H1 (cell line): ENCODE measurements at regions of chr1 and their contacts with region 1.

Region 1: DNA sequence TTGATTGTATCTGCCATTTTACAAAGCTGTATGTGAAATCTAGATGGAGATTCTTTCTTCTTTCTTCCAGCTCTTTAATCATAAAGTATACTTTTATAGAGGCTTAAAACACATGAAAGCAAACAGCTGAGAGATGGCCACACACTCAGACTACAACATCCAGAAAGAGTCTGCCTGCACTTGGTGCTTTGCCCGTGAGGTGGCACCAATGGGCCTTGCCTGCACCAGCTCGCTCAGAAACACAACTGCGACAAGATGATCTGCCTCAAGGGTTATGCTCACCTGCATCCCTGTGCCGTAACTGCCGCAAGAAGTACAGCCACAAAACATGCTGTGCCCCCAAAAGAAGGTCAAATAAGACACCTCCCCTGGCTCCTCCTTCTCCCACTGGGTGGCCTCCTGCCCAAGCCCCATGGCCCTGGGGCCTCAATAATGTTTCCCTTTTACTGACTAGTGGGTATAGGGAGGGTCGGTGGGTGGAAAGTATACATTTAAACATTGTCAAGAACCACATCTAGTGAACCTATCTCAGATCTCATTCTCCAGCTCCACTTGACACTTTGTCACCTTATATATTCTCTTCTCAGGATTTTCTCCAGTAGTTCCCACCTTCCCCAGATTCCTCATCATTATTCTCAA is 66.7 kb upstream of the ANGPTL3 start:
- DNase-seq: peak; percentile 60 to 75
- H3K4me3 ChIP-seq: no peak overlapping the region
- H3K27ac ChIP-seq: no peak overlapping the region
- H3K4me1 ChIP-seq: no peaks in the 10 kb centered on the region
- H3K27me3 ChIP-seq: peaks cover 0 to 1% (median 0%) of the 10 kb centered on the region in 4 experiments; a peak in 1 of 7 replicates
- CTCF ChIP-seq: peak; percentile 85 to 97 (median 96)
- EP300 ChIP-seq: no peak
- POLR2A ChIP-seq: no peak
- RAD21 ChIP-seq: peak; percentile 97 to 98

Region 2: DNA sequence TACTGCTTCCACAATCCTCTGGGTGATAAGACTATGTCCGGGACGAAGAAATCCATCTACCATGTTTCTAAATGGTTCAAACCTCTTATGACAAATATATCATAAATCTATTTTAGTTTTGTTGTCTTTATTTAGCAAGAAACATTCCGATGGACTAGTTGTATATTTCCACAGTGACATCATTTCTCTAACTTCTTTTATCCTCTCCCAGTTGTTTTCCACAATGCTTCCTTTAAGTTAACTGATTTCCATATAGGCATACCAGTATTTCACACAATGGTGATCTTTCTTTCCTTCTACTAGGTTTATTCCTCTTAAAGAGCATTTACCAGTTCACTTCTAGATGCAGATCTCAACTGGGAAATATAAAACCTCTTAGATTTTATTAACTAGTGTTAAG is 49.0 kb before region 1 on chr1:
- CTCF ChIA-PET with region 1: no interaction called
- POLR2A ChIA-PET with region 1: no interaction called
- DNase-seq: no peak
- H3K4me3 ChIP-seq: no peak overlapping the region
- H3K27ac ChIP-seq: no peak overlapping the region
- H3K4me1 ChIP-seq: peaks cover 0 to 3% (median 0%) of the 10 kb centered on the region in 4 experiments; a peak in 2 of 7 replicates
- H3K27me3 ChIP-seq: no peaks in the 10 kb centered on the region
- CTCF ChIP-seq: no peak
- EP300 ChIP-seq: no peak
- POLR2A ChIP-seq: no peak
- RAD21 ChIP-seq: no peak

Region 3: DNA sequence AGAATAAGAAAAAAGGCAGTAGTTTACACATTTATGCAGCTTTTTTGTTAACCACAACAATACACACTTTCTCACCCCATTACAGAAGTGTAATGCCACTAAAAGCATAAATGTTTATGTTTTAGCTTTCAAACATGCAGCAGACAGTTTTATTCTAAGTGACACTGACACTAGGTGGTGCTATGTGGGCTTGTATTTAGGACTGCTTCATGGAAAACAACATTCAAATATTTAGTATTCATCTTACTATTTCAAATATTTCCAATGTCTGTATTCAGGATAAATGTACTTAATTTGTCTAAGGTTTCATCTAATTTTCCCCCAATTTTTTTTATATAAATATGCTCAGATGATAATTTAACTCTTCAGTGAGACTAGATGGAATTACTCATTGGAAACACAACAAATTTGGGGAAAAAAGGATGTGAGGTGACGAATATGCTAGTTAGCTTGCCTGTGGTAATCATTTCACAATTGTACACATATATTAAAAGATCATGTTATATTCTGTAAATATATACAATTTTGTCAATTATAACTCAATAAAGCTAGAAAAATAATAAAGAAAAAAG is 22.4 kb before region 1 on chr1:
- CTCF ChIA-PET with region 1: interaction called, 10 read pairs
- POLR2A ChIA-PET with region 1: no interaction called
- DNase-seq: no peak
- H3K4me3 ChIP-seq: no peak overlapping the region
- H3K27ac ChIP-seq: no peak overlapping the region
- H3K4me1 ChIP-seq: no peaks in the 10 kb centered on the region
- H3K27me3 ChIP-seq: no peaks in the 10 kb centered on the region
- CTCF ChIP-seq: peak in 1 of 3 experiments; percentile 60; a peak in 2 of 4 replicates
- EP300 ChIP-seq: no peak
- POLR2A ChIP-seq: no peak
- RAD21 ChIP-seq: peak; percentile 54 to 56

Region 4: GRCh38 chr1:62841587-62842169 is 311.0 kb after region 1 on chr1:
- CTCF ChIA-PET with region 1: interaction called, 10 read pairs
- POLR2A ChIA-PET with region 1: no interaction called
- DNase-seq: no peak
- H3K4me3 ChIP-seq: no peak overlapping the region
- H3K27ac ChIP-seq: no peak overlapping the region
- H3K4me1 ChIP-seq: no peaks in the 10 kb centered on the region; a peak in 1 of 7 replicates
- H3K27me3 ChIP-seq: no peaks in the 10 kb centered on the region
- CTCF ChIP-seq: peak in 2 of 3 experiments; percentile 49 to 59; a peak in 2 of 4 replicates
- EP300 ChIP-seq: no peak
- POLR2A ChIP-seq: no peak
- RAD21 ChIP-seq: peak; percentile 75 to 79